ENCODE measurements at regions of chr17 and their contacts with region 1.

Region 1: DNA sequence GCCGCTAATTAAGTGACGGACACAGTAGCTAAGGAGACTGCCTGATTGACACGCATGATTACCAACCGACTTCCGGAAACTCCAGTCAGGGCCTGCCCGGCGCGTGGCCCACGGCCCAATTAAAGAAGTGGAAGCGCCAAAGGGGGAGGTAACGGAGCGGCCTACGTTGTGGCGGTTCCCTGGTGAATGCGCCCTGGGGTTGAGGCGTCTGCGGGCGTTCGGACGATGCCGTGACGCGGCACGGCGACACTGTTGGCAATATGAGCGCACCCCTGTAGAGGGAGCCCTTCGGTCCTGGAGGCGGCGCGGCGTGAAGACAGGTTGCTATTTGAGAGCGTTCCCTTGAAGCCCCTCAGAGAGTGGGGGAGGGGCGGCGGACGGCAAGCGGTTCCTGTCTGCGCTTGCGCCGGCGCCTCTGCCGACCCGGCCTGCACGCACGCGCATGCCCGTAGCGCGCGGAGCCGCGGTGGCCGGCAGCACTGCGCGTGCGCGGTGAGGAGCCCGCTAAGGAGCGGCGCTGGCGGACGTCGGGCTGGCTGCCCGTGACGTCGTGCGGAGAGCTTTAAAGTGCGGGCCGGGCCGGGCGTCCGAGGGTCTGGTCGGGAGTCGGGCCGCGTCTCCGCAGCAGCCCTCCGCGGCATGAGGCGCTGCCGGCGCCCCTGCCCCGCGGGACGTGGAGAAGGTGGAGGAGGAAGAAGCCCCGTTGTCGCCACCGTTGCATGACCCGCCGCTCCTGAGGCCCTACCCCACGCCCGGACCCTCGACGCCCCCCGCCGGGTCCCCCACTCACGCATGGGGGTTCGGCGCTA is at the start of gene ALKBH5:
- DNase-seq: peak; percentile 98
- ATAC-seq: peak; percentile 84
- H3K4me3 Mint-ChIP-seq: peak within 1 kb of the TSS; percentile 97
- H3K27ac Mint-ChIP-seq: peak within 1 kb of the TSS; percentile 94
- H3K4me1 Mint-ChIP-seq: peaks cover 45% of the 10 kb centered on the region
- H3K27me3 Mint-ChIP-seq: no peaks in the 10 kb centered on the region
- total RNA-seq, gene ALKBH5: 163 to 168 TPM

Region 2: DNA sequence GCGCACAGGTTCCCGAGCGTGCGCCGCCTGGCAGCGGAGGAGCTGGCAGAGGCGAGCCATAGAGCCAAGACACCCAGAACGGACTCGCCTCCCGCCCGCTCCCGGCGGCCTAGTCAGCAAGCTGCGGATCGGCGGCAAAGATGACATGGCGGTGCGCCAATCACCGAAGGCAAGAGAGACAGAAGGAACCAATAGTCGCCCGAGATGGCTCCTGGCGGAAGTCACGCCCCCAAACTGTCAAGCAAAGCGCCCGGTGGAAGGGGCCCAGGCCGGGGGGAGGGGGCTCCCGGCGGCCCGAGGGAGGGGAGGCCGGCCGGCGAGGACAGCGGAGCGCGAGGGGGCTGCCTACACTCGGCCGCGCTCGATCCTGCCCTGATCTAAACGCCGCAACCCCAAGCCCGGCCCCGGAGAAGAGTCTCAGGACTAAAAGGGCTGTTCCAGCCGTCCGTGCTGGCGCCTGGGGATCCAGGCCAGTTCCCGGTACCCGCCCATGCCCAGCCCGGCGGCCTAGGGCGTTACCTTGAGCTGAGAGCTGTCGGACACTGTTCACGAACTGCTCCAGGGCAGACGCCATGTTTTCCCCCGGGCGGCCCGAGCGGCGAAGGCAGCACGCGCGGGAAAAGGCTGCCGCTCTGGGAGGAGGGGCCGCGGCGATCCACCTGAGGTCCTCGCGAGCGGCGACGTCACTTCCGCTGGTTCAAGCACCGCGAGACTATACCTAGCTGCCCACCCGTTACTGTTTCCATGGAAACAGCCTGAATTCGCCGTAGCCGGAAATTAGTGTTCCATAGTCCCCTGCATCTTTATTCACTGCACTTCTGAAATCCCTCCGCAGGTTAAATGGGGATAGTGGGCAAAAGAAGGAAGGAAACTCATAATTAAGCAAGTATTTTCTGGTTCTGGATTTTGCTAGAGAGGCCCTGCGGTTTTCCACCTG is 902.7 kb before region 1 on chr17 and contains the start of gene COPS3:
- CTCF ChIA-PET with region 1: no interaction called
- POLR2A ChIA-PET with region 1: no interaction called
- intact Hi-C with region 1: loop called in 1 of 2 experiments (anchors 1 kb)
- DNase-seq: peak; percentile 99
- ATAC-seq: peak; percentile 94
- H3K4me3 Mint-ChIP-seq: peak within 1 kb of the TSS; percentile 92
- H3K27ac Mint-ChIP-seq: peak within 1 kb of the TSS; percentile 95
- H3K4me1 Mint-ChIP-seq: peaks cover 41% of the 10 kb centered on the region
- H3K27me3 Mint-ChIP-seq: no peaks in the 10 kb centered on the region
- total RNA-seq, gene COPS3: 79.6 to 83.1 TPM

Region 3: DNA sequence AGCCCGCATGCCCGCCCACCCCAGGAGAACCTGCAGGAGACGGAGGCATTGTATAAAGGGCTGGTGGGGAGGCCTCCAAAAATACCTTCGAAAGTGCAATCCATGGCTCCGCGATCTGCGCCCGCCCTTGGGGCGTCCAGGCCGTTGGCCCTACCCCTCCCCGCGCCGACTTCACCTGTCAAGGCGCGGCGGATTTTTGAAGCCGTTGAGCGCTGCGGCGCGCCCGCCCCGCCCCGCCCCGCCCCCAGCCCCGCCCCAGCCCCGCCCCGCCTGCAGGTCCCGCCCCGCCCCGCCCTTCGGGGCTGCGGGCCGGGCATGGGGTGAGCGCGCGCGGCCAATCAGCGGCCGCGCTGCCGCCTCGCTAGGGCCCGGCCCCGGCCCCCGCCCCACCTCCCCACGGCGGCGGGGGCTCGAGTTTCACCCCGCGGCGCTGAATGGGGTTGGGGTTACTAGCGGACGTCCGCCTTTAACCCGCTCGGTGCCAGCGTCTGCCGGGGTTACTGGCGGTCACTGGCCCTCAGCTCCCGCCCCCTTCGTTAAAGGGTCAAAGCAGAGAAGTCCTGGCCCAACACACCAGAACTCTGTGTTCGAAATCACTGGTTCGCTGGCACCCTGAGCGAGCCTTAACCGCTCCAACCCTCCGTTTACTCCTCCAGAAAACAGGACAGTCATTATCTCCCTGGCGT is 360.0 kb before region 1 on chr17:
- CTCF ChIA-PET with region 1: no interaction called
- POLR2A ChIA-PET with region 1: interaction called, 4 read pairs
- intact Hi-C with region 1: loop called in 1 of 2 experiments (anchors 5 kb)
- DNase-seq: peak; percentile 90
- ATAC-seq: peak; percentile 80
- H3K4me3 Mint-ChIP-seq: peak overlapping the region; percentile 72
- H3K27ac Mint-ChIP-seq: peak overlapping the region; percentile 96
- H3K4me1 Mint-ChIP-seq: peaks cover 92% of the 10 kb centered on the region
- H3K27me3 Mint-ChIP-seq: no peaks in the 10 kb centered on the region

Region 4: DNA sequence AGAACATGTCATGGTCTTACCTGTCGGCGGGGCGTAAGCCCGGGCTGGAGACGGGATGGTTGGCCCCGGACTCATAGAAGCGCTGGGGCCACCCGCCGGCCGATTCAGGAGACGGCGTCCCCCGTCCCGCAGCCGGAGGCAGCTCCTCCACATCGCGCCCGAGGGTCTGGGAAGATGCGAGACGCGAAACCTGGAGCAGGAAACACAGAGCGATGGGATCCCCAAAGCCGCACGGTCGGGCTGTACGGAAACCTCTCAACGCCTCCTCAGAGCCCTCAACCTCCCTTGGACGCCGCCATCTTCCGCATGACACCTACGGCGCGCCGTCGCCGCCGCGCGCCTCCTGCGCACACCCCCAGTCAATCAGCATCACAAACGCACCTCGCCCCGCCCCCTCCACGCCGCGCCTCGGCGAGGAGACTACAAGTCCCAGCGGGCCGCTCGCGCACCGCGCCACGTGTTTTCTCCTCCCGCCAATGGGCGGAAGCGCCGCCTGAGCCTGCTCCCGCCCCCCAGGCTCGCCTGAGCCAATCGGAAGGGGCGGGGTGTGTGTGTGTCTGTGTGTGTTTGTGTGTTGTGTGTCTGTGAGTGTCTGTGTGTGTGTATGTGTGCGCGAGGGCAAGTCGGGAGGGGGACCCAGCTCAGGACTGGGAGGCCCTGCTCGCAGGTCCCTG is 144.5 kb before region 1 on chr17 and contains the starts of genes ATPAF2 and GID4:
- CTCF ChIA-PET with region 1: interaction called, 3 read pairs
- POLR2A ChIA-PET with region 1: no interaction called
- intact Hi-C with region 1: loop called (anchors 1 kb)
- DNase-seq: peak; percentile 100
- ATAC-seq: peak; percentile 91
- H3K4me3 Mint-ChIP-seq: peak within 1 kb of the TSS; percentile 91
- H3K27ac Mint-ChIP-seq: peak within 1 kb of the TSS; percentile 92
- H3K4me1 Mint-ChIP-seq: peaks cover 49% of the 10 kb centered on the region
- H3K27me3 Mint-ChIP-seq: no peaks in the 10 kb centered on the region
- total RNA-seq, gene ATPAF2: 32.9 to 40.3 TPM
- total RNA-seq, gene GID4: 6.7 to 7.7 TPM

Region 5: GRCh38 chr17:18100616-18101015 is 82.9 kb before region 1 on chr17:
- CTCF ChIA-PET with region 1: no interaction called
- POLR2A ChIA-PET with region 1: no interaction called
- intact Hi-C with region 1: no loop called
- DNase-seq: no peak
- ATAC-seq: no peak
- H3K4me3 Mint-ChIP-seq: no peak overlapping the region
- H3K27ac Mint-ChIP-seq: no peak overlapping the region
- H3K4me1 Mint-ChIP-seq: no peaks in the 10 kb centered on the region
- H3K27me3 Mint-ChIP-seq: no peaks in the 10 kb centered on the region

Region 6: DNA sequence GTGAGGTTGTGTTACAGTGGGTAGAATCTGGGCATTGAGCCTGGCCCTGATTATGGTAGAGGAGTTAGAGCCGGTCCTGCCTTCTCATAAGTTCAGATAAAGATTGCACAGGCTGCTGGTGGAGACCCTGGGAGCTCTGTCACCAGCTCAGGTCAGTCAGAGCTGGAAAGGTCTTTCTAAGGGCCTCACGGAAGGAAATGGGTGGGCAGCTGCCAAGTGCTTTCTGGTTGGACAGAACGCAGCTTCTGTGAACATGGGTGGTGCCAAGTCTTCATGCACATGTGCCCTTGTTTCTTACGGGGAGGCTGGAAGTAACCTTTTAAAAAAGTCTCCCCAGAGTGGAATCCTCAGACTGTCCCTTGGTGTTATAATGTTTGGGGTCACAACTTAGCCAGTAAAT is 15.0 kb after region 1 on chr17:
- CTCF ChIA-PET with region 1: interaction called, 23 read pairs
- POLR2A ChIA-PET with region 1: no interaction called
- intact Hi-C with region 1: no loop called
- DNase-seq: no peak
- ATAC-seq: no peak
- H3K4me3 Mint-ChIP-seq: no peak overlapping the region
- H3K27ac Mint-ChIP-seq: no peak overlapping the region
- H3K4me1 Mint-ChIP-seq: peaks cover 39% of the 10 kb centered on the region
- H3K27me3 Mint-ChIP-seq: no peaks in the 10 kb centered on the region

Region 7: GRCh38 chr17:18235743-18236256 is 52.3 kb after region 1 on chr17:
- CTCF ChIA-PET with region 1: no interaction called
- POLR2A ChIA-PET with region 1: no interaction called
- intact Hi-C with region 1: no loop called
- DNase-seq: peak; percentile 78
- ATAC-seq: peak; percentile 91
- H3K4me3 Mint-ChIP-seq: no peak overlapping the region
- H3K27ac Mint-ChIP-seq: peak overlapping the region; percentile 74
- H3K4me1 Mint-ChIP-seq: peaks cover 16% of the 10 kb centered on the region
- H3K27me3 Mint-ChIP-seq: no peaks in the 10 kb centered on the region

Region 8: GRCh38 chr17:18314731-18315561 is 131.4 kb after region 1 on chr17 and contains the starts of genes SMCR8 and TOP3A:
- CTCF ChIA-PET with region 1: no interaction called
- POLR2A ChIA-PET with region 1: interaction called, 5 read pairs
- intact Hi-C with region 1: loop called (anchors 1 kb)
- DNase-seq: peak; percentile 99
- ATAC-seq: peak; percentile 95
- H3K4me3 Mint-ChIP-seq: peak within 1 kb of the TSS; percentile 85
- H3K27ac Mint-ChIP-seq: peak within 1 kb of the TSS; percentile 100
- H3K4me1 Mint-ChIP-seq: peaks cover 71% of the 10 kb centered on the region
- H3K27me3 Mint-ChIP-seq: no peaks in the 10 kb centered on the region
- total RNA-seq, gene SMCR8: 13.2 to 14.5 TPM
- total RNA-seq, gene TOP3A: 44.1 to 57.9 TPM

Region 9: DNA sequence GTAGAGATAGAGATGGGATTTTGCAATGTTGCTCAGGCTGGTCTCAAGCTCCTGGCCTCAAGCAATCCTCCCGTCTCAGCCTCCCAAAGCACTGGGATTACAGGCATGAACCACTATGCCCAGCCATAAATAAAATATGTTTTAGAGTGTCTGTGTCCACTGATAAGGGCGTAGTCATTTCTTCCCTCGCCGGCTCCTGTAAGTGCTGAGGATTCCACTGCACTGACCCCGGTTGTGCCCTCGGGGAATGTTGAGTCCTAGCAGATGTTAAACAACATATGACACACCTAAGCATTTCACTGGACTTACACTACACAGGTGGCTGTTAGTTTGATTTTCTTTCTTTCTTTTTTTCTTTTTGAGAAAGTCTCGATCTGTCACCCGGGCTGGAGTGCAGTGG is 185.4 kb after region 1 on chr17:
- CTCF ChIA-PET with region 1: no interaction called
- POLR2A ChIA-PET with region 1: no interaction called
- intact Hi-C with region 1: no loop called
- DNase-seq: no peak
- ATAC-seq: no peak
- H3K4me3 Mint-ChIP-seq: no peak overlapping the region
- H3K27ac Mint-ChIP-seq: no peak overlapping the region
- H3K4me1 Mint-ChIP-seq: no peaks in the 10 kb centered on the region
- H3K27me3 Mint-ChIP-seq: peaks cover 5% of the 10 kb centered on the region

Region 10: DNA sequence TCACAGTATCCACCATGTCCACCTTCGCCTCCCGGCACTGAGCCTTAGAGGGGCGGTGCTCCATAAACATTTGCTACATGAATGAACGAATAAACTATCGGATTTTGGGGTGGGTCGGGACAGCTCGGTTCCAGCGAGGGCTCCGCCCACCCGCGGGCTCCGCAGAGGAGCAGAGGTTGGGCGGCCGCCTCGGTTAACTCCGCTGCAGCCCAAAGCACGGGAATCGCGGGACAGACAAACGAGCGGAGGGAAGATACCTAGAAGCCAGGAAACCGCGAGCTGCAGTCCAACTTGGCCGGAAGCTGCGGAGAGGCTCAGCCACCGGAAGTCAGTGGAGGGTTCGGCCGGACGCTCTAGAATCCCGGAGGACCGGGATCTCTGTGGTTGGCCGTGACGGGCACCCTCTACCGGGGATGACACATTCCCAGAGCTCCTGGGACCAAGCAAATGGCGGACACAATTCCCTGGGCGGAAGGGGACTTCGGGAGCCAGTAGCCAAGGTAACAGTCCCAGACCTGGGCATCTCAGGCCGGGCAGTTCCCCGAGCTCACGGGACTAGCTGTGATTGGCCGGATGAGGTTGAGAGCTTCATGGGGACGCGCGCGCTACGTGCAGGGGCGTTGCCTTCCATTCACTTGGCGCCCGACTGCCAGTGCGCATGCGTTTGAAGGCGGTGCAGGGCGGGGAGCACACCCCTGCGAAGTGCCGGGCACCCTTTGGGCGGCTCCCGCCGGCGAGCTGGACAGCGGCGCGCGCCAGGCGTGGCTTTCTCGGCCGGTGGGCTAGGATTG is 1194.3 kb after region 1 on chr17:
- CTCF ChIA-PET with region 1: no interaction called
- POLR2A ChIA-PET with region 1: no interaction called
- intact Hi-C with region 1: loop called in 1 of 2 experiments (anchors 2 kb)
- DNase-seq: peak; percentile 97
- ATAC-seq: peak; percentile 96
- H3K4me3 Mint-ChIP-seq: peak overlapping the region; percentile 89
- H3K27ac Mint-ChIP-seq: peak overlapping the region; percentile 98
- H3K4me1 Mint-ChIP-seq: peaks cover 16% of the 10 kb centered on the region
- H3K27me3 Mint-ChIP-seq: no peaks in the 10 kb centered on the region

Measured in activated CD4-positive, alpha-beta T cell treated with anti-CD3 and anti-CD28 coated beads for 36 hours (primary cell).